ENCODE measurements at regions of chr18 and their contacts with region 1.

Region 1: DNA sequence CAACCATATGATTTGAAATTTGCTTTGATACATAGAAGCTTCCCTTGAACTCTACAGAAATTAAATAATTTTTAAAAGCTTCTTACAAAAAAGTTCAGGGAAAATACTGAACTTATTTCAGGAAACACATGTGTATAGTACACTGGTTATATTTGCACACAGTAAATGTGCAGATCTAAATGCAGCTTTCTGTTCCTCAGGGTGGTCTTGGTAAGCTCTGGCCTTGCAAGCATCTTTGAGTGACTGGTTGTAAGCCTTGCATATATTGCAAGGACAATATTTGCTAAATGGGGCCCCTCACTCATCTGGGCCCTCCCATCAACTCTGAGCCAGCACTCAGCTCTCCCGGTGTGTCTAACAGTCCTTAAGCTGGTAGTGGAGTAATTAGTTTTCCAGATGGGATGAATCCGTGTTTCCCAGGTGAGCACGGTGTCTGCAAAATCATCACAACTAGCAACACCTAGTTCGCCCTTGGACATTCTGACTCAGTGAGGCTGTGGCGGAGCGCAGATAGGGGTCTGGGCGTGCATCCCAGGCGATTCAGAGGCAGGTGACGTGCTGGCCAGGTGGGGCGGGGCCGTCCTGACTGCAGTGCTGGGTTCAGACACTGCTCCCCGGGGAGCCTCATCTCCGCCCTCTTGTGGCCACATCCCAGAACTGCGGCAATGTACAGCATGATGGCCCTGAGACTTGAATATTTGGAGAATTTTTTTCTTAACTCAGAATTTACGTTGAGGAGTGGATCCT is 149.6 kb downstream of the MBP start:
- DNase-seq: peak; percentile 3
- H3K4me3 ChIP-seq: no peak overlapping the region
- H3K27me3 ChIP-seq: peaks cover 2% of the 10 kb centered on the region; the same call in 1 of the 2 replicates
- CTCF ChIP-seq: peak; percentile 96

Region 2: DNA sequence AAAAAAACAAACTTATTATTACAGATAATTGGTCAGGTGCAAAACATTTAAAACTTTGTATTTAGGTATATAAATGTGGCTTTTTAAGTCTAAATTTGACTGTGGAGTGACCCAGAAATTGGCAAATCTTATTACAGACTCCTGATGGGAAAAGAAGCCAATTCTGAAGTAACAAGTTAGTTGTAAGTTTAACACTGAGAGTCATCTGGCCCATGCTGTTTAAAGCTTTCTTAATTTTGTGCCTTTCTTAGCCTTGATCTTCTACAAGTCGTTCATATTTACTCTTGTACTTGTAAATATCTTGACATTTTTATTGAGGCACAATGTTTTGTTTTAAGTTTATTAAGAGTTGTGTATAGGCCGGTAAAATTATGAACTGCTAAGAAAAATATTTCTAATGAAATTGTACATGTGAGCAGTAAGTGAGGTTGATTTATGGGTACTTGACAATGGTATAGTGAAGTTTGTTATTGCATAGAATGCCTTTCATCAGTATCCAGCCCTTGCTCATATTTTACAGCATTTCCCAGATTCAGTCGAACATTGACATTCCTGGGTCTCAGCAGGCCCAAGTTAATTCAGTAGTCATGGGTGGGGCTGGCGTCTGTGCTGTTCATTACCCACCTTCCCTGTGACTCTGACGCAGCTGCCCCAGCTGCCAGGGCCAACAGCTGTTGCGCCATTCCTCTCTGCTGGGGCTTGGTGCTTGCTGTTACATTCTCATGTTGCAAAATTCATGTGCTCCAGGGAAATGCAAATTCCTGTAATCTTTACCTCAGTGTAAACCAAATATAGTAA is 39.3 kb before region 1 on chr18:
- CTCF ChIA-PET with region 1: interaction called, 20 read pairs
- POLR2A ChIA-PET with region 1: no interaction called
- DNase-seq: no peak
- H3K4me3 ChIP-seq: no peak overlapping the region
- H3K27me3 ChIP-seq: no peaks in the 10 kb centered on the region
- CTCF ChIP-seq: no peak

Region 3: GRCh38 chr18:76970770-76971559 is 12.0 kb before region 1 on chr18:
- CTCF ChIA-PET with region 1: interaction called, 16 read pairs
- POLR2A ChIA-PET with region 1: no interaction called
- DNase-seq: no peak
- H3K4me3 ChIP-seq: no peak overlapping the region
- H3K27me3 ChIP-seq: no peaks in the 10 kb centered on the region
- CTCF ChIP-seq: no peak

Region 4: GRCh38 chr18:77067291-77068061 is 84.5 kb after region 1 on chr18:
- CTCF ChIA-PET with region 1: no interaction called
- POLR2A ChIA-PET with region 1: no interaction called
- DNase-seq: peak; percentile 49
- H3K4me3 ChIP-seq: no peak overlapping the region
- H3K27me3 ChIP-seq: no peaks in the 10 kb centered on the region
- CTCF ChIP-seq: 0 out of 2 replicates have a peak, but pooled peaks have one; percentile 16

Region 5: DNA sequence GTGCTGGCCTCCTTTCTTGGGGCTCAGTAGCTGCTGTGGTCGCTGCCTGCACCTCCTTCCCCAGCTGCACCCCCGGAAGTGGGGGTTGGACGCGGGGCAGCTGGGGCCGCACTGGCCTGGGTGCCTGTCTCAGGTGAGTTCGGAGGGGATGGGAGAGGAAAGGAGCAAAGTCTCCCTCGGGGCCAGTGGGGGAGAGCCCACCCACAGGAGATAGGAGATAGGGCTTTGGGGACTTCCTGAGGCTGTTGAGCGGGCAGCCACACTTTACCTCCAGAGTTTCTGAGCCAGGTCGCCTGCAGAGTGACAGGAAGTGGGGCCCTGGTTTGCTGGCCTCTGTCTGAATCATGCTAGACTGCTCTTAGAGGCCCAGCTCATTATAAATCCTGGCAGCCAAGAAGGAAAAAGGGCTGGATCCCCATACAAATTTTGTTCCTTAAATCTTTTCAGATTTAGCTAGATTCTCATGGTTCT is 141.5 kb after region 1 on chr18:
- CTCF ChIA-PET with region 1: no interaction called
- POLR2A ChIA-PET with region 1: no interaction called
- DNase-seq: no peak
- H3K4me3 ChIP-seq: no peak overlapping the region
- H3K27me3 ChIP-seq: no peaks in the 10 kb centered on the region
- CTCF ChIP-seq: no peak